Activated CD4-positive, alpha-beta T cell treated with anti-CD3 and anti-CD28 coated beads, Interleukin-2, amount 10 ng/mL, durations not matched to agents 24 days and 14 days (primary cell): ENCODE measurements at regions of chr16 and their contacts with region 1.

Region 1: GRCh38 chr16:20910781-20911321 is 10.3 kb downstream of the LYRM1 start:
- DNase-seq: no peak
- H3K4me3 Mint-ChIP-seq: peak overlapping the region; percentile 62
- H3K27ac Mint-ChIP-seq: peak overlapping the region; percentile 87
- H3K4me1 Mint-ChIP-seq: peaks cover 42% of the 10 kb centered on the region
- H3K27me3 Mint-ChIP-seq: no peaks in the 10 kb centered on the region

Region 2: GRCh38 chr16:20874088-20874581 is 36.7 kb before region 1 on chr16:
- intact Hi-C with region 1: loop called (anchors 5 kb)
- DNase-seq: peak; percentile 80
- H3K4me3 Mint-ChIP-seq: peak overlapping the region; percentile 70
- H3K27ac Mint-ChIP-seq: peak overlapping the region; percentile 86
- H3K4me1 Mint-ChIP-seq: peaks cover 68% of the 10 kb centered on the region
- H3K27me3 Mint-ChIP-seq: no peaks in the 10 kb centered on the region

Region 3: DNA sequence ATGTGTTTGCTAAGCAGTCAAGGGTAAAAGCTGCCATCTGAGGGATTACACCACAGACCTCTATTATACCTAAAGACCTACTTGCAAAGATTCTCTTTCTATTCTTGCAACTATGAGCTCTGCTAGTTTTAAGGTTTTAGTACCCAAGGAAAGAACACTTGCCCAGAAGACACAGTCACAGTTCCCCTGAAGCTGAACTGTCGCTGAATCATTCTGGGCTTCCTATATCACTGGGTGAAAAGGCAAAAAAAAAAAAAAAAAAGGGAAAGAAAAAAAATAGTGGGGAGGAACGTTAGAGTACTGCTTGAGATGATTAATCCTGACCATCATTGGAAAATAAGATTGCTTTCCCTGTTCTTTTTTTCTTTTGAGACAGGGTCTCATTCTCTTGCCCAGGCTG is 27.6 kb after region 1 on chr16:
- intact Hi-C with region 1: loop called (anchors 2 kb)
- DNase-seq: peak; percentile 60
- H3K4me3 Mint-ChIP-seq: no peak overlapping the region
- H3K27ac Mint-ChIP-seq: peak overlapping the region; percentile 84
- H3K4me1 Mint-ChIP-seq: peaks cover 30% of the 10 kb centered on the region
- H3K27me3 Mint-ChIP-seq: no peaks in the 10 kb centered on the region